ENCODE measurements at regions of chr16 and their contacts with region 1.

Region 1: DNA sequence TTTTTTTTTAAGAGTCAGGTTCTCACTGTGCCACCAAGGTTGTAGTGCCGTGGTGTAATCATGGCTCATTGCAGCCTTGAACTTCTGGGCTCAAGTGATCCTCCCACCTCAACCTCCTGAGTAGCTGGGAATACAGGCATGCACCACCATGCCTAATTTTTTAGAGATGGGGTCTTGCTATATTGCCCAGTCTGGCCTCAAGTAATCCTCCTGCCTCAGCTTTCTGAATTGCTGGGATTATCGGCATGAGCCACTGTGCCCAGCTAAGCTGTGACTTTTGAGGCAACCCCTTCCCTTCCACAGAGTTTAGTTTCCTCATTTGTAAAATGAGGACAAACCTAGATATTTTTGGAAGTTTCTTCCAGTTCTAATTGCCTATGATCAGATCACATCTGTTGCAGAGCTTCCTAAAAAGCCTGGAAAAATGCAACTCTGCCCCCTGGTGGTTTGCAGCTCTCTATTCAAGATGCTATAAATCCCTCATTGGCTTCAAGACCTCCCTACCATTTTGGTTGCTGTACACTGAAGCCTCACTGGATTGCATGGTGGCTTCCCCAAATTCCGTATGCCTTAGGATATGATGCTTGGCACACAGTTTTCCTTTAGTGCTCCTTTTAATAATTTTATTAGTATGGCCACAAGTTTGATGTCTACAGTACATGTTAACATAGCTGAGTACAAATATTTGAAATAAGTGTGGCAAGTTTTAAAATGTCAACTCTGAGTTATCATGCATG is 19.3 kb downstream of the GDE1 start:
- DNase-seq: peak; percentile 79
- H3K4me3 Mint-ChIP-seq: no peak overlapping the region
- H3K27ac Mint-ChIP-seq: no peak overlapping the region
- H3K4me1 Mint-ChIP-seq: peaks cover 17% of the 10 kb centered on the region
- H3K27me3 Mint-ChIP-seq: no peaks in the 10 kb centered on the region
- CTCF ChIP-seq: peak; percentile 77

Region 2: DNA sequence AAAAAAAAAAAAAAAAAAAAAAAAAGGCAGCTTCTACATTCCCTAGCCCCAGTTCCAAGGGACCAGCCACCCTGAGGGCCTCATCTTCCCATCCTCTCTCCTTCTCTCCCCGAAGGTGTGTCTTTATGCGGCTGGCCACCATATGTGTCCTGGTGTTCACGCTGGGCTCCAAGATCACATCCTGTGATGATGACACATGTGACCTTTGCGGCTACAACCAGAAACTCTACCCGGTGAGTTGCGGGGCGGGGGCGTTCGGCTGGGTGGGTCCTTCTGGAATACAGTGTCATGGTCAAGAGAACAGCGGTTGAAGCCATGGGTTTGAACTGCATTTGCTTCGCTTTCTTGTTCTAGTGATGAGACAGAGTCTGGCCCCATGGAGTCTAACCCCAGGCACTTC is 457.8 kb before region 1 on chr16:
- CTCF ChIA-PET with region 1: no interaction called
- POLR2A ChIA-PET with region 1: no interaction called
- intact Hi-C with region 1: no loop called
- DNase-seq: no peak
- H3K4me3 Mint-ChIP-seq: no peak overlapping the region
- H3K27ac Mint-ChIP-seq: no peak overlapping the region
- H3K4me1 Mint-ChIP-seq: no peaks in the 10 kb centered on the region
- H3K27me3 Mint-ChIP-seq: no peaks in the 10 kb centered on the region
- CTCF ChIP-seq: no peak

Region 3: DNA sequence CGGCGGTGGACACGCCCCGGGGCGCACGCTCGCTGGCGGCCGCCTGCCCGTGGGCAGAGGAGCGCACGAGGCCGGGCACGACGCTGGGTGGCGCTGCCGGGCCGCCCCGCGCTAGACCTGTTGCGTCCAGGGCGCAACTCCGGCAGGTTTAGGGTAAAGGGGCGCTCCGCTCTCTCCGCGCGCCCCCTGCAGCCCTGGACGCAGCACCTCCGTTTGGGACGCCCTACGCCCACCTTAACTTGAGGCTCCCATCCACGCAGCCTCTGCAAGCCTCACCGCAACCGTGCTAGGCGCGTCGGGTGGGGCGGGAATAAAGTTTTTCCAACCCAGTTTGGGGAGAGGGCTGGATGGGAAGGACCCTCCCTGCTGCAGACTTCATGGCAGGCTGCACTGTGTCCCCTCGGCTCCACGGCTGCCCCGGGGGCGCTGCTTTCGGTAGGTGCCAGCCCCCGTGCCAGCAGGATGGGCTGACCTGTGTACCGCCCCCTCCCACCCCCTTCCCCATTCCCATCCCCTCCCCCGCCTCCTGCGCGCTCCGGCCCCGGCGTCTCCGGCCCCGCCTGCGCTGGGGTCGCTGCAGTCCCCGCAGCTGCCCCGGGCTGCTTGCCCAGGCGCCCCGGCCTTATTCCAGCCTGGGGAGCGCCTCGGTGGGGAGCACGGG is 334.7 kb before region 1 on chr16 and contains the start of gene SYT17:
- CTCF ChIA-PET with region 1: interaction called, 3 read pairs
- POLR2A ChIA-PET with region 1: no interaction called
- intact Hi-C with region 1: loop called (anchors 5 kb)
- DNase-seq: peak; percentile 59
- H3K4me3 Mint-ChIP-seq: peak within 1 kb of the TSS; percentile 46
- H3K27ac Mint-ChIP-seq: no peak within 1 kb of the TSS
- H3K4me1 Mint-ChIP-seq: no peaks in the 10 kb centered on the region
- H3K27me3 Mint-ChIP-seq: peaks cover 28% of the 10 kb centered on the region
- CTCF ChIP-seq: peak; percentile 82
- total RNA-seq, gene SYT17: not detected in 2 replicates

Region 4: DNA sequence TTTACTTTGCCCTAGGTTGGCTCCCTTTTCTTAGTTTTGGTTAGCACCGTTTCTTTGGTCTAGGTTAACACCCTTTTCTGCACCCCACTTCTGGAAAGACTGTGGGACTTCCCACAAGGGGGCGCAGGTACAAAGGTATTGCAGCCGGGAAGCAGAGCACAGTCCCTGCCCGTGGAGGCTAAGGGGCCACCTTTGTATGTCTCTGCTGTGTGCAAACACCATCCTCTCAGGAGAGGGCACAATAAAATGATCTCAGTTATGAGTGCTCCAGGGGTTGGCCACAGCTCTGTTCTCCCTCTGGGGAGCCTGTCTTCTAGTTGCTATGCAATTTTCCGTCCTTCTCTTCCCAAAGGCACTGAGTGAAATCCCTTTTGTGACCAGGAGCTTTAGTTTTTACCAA is 113.3 kb before region 1 on chr16:
- CTCF ChIA-PET with region 1: interaction called, 328 read pairs
- POLR2A ChIA-PET with region 1: interaction called, 28 read pairs
- intact Hi-C with region 1: loop called (anchors 1 kb)
- DNase-seq: peak; percentile 73
- H3K4me3 Mint-ChIP-seq: no peak overlapping the region
- H3K27ac Mint-ChIP-seq: no peak overlapping the region
- H3K4me1 Mint-ChIP-seq: peaks cover 20% of the 10 kb centered on the region
- H3K27me3 Mint-ChIP-seq: no peaks in the 10 kb centered on the region
- CTCF ChIP-seq: peak; percentile 51

Region 5: GRCh38 chr16:19513377-19514053 is 11.0 kb after region 1 on chr16:
- CTCF ChIA-PET with region 1: interaction called, 26 read pairs
- POLR2A ChIA-PET with region 1: interaction called, 6 read pairs
- intact Hi-C with region 1: no loop called
- DNase-seq: peak; percentile 52
- H3K4me3 Mint-ChIP-seq: no peak overlapping the region
- H3K27ac Mint-ChIP-seq: peak overlapping the region; percentile 57
- H3K4me1 Mint-ChIP-seq: peaks cover 23% of the 10 kb centered on the region
- H3K27me3 Mint-ChIP-seq: no peaks in the 10 kb centered on the region
- CTCF ChIP-seq: no peak

Region 6: GRCh38 chr16:19549673-19550072 is 47.1 kb after region 1 on chr16:
- CTCF ChIA-PET with region 1: no interaction called
- POLR2A ChIA-PET with region 1: no interaction called
- intact Hi-C with region 1: no loop called
- DNase-seq: no peak
- H3K4me3 Mint-ChIP-seq: no peak overlapping the region
- H3K27ac Mint-ChIP-seq: no peak overlapping the region
- H3K4me1 Mint-ChIP-seq: no peaks in the 10 kb centered on the region
- H3K27me3 Mint-ChIP-seq: no peaks in the 10 kb centered on the region
- CTCF ChIP-seq: no peak

Region 7: GRCh38 chr16:19883296-19883965 is 380.9 kb after region 1 on chr16:
- CTCF ChIA-PET with region 1: no interaction called
- POLR2A ChIA-PET with region 1: no interaction called
- intact Hi-C with region 1: no loop called
- DNase-seq: no peak
- H3K4me3 Mint-ChIP-seq: no peak overlapping the region
- H3K27ac Mint-ChIP-seq: no peak overlapping the region
- H3K4me1 Mint-ChIP-seq: peaks cover 10% of the 10 kb centered on the region
- H3K27me3 Mint-ChIP-seq: peaks cover 12% of the 10 kb centered on the region
- CTCF ChIP-seq: no peak

Measured in MCF 10A (cell line).